Panc1 (cell line): ENCODE measurements at regions of chr17 and their contacts with region 1.

Region 1: DNA sequence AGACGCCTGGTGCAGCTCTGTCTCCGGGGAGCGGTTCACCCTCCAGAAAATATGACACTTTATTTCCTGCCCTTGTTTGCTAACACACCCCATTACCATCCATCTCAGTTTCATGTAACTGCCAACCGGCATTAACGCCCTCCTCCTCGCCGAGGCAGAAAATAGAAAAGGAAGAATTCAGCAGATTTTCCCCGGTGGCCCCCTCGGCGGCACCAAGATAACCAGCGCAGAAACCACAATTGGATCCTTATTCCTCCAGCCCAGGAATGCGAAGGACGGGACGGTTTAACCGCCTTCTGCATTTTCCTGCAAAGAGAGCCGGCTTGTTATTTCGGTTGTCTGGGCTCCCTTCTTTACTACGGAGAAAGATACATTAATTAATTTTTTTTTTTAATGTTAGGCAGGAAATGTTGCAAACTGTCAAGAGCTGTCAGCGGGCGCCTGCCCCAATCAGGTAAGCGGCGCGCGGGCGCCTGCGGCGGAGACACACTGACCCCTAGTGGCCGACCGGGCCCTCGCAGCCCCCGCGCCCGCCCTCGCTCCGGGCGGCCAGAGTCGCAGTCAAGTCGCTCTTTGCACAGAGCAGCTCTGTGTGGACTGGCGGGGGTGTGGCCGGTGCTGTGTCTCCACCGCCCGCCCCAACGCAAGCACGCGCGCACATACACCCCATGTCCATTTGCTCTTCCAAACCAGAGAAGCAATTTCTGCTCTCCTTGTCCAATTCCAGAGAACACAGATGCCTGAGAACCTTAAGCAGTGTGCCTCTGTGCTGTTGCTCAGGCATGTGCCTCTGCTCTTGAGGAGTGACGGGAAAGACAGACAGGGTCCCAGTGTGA is 53.6 kb downstream of the C17orf67 start:
- DNase-seq: no peak
- ATAC-seq: peak; percentile 98
- H3K4me3 ChIP-seq: peak overlapping the region; percentile 24 to 40
- H3K27ac ChIP-seq: no peak overlapping the region
- H3K4me1 ChIP-seq: peaks cover 11% of the 10 kb centered on the region
- H3K27me3 ChIP-seq: no peaks in the 10 kb centered on the region
- CTCF ChIP-seq: peak; percentile 100

Region 2: GRCh38 chr17:56592487-56593085 is 187.5 kb before region 1 on chr17:
- CTCF ChIA-PET with region 1: interaction called, 3 read pairs
- POLR2A ChIA-PET with region 1: no interaction called
- in situ Hi-C with region 1: no loop called
- intact Hi-C with region 1: loop called (anchors 5 kb)
- DNase-seq: no peak
- ATAC-seq: peak; percentile 70
- H3K4me3 ChIP-seq: peak overlapping the region; percentile 61 to 87
- H3K27ac ChIP-seq: no peak overlapping the region
- H3K4me1 ChIP-seq: peaks cover 13% of the 10 kb centered on the region
- H3K27me3 ChIP-seq: peaks cover 5% of the 10 kb centered on the region
- CTCF ChIP-seq: peak; percentile 99

Region 3: DNA sequence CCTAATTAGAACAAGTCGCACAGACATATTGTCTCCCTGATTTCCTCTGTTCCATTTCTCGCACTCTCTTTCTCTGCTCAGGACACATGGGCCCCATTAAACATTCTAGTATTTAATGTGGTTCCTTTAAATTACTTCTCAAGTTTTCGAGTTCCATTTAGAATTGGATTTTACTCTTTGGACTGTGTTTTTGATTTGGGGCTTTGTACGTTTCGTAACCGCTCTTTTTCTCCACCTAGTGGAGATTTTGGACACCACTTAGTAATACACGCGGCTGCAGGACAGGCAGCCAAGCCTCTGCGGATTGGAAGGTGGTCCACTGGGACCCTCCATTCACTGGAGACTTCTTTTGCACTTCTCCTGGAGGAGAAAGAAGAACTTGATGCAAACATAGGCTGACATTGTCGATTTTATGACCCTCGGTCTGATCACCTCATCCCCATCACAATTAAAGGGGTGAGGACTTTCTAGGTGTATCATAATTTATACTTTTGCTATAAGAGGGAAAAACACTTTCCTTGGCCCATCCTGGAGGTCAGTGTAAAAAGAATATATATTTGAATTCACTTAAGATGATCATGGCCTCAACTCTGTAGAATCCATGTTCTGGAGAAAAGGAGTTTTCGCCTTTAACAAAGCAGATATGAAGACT is 100.9 kb before region 1 on chr17:
- CTCF ChIA-PET with region 1: no interaction called
- POLR2A ChIA-PET with region 1: no interaction called
- in situ Hi-C with region 1: no loop called
- intact Hi-C with region 1: loop called (anchors 10 kb)
- DNase-seq: no peak
- ATAC-seq: peak; percentile 81
- H3K4me3 ChIP-seq: no peak overlapping the region; a peak in 1 of 4 replicates
- H3K27ac ChIP-seq: no peak overlapping the region
- H3K4me1 ChIP-seq: 0 out of 2 replicates have a peak, but pooled peaks cover 5% of the 10 kb centered on the region
- H3K27me3 ChIP-seq: no peaks in the 10 kb centered on the region
- CTCF ChIP-seq: peak; percentile 85